SK-N-SH (cell line): ENCODE measurements at regions of chr17 and their contacts with region 1.

Region 1: DNA sequence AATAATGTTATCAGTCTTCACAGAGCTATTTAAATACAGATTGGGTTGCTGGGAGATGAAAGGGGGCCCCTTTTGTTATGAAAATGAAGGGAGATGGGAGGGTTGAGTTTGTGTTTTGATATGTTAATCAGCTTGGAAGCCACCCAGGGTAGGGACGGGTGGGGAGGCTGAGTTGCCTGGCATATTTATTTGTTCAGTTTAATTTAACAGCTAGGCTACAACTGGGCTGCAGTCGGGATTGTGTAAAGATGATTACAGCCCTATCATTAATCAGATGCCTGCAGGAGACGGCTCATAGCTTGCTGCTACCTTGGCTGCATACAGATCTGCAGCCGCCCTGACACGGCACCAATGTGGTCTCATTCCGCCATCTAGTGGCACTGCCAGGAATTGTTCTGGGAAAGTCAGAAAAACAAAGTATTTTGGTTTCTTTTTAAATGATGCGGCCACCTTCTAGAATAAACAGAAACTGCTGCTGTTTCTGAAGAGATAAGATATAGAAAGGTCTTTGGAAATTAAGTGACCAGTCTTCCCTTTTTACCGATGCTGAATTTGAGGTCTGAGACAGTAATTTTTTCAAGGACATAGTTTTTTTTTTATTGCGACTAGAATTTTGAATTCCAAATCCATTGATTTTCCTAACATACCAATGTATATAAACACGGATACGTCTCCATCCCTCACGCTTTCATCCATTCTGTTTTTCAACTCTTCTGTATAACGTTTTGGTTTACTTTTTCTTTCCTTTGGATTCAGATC is 458.0 kb upstream of the ASIC2 start:
- DNase-seq: peak; percentile 74
- H3K4me3 ChIP-seq: peak overlapping the region; percentile 26 to 46; a peak in 3 of 4 replicates
- H3K27ac ChIP-seq: no peak overlapping the region
- H3K4me1 ChIP-seq: peaks cover 0 to 5% of the 10 kb centered on the region in 2 experiments; a peak in 2 of 4 replicates
- H3K27me3 ChIP-seq: no peaks in the 10 kb centered on the region
- CTCF ChIP-seq: peak; percentile 89
- EP300 ChIP-seq: no peak
- RAD21 ChIP-seq: peak; percentile 93

Region 2: GRCh38 chr17:33038740-33039139 is 712.4 kb before region 1 on chr17:
- CTCF ChIA-PET with region 1: interaction called, 10 read pairs
- POLR2A ChIA-PET with region 1: no interaction called
- DNase-seq: peak; percentile 73
- H3K4me3 ChIP-seq: no peak overlapping the region
- H3K27ac ChIP-seq: no peak overlapping the region
- H3K4me1 ChIP-seq: no peaks in the 10 kb centered on the region
- H3K27me3 ChIP-seq: no peaks in the 10 kb centered on the region; the same call in 1 of the 2 replicates
- CTCF ChIP-seq: peak; percentile 77
- EP300 ChIP-seq: no peak
- RAD21 ChIP-seq: peak; percentile 59

Region 3: DNA sequence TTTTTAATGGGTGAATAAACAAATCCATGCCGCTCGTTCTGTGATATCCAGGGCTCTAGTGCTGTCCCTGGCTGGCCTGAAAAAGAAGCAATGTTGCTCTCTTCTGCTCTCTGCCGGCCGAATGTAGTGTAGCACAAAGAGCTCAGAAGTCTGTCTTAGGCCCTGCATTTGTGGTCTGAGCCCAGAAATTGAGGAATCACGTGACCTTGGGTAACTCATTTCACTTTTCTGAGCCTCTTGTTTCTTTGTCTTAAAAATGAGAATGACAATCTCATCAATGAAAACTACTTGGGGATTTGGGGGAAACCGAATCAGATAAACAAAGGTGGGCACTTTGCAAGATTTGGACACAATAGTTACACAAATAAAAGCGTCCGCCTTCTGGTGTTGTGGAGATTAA is 76.4 kb before region 1 on chr17:
- CTCF ChIA-PET with region 1: interaction called, 12 read pairs
- POLR2A ChIA-PET with region 1: no interaction called
- DNase-seq: peak; percentile 62
- H3K4me3 ChIP-seq: no peak overlapping the region; a peak in 1 of 4 replicates
- H3K27ac ChIP-seq: no peak overlapping the region
- H3K4me1 ChIP-seq: no peaks in the 10 kb centered on the region
- H3K27me3 ChIP-seq: no peaks in the 10 kb centered on the region
- CTCF ChIP-seq: peak; percentile 80
- EP300 ChIP-seq: no peak
- RAD21 ChIP-seq: peak; percentile 72

Region 4: GRCh38 chr17:33725675-33726271 is 25.3 kb before region 1 on chr17:
- CTCF ChIA-PET with region 1: interaction called, 62 read pairs
- POLR2A ChIA-PET with region 1: no interaction called
- DNase-seq: peak; percentile 70
- H3K4me3 ChIP-seq: no peak overlapping the region
- H3K27ac ChIP-seq: no peak overlapping the region
- H3K4me1 ChIP-seq: no peaks in the 10 kb centered on the region
- H3K27me3 ChIP-seq: no peaks in the 10 kb centered on the region
- CTCF ChIP-seq: peak; percentile 74
- EP300 ChIP-seq: no peak
- RAD21 ChIP-seq: peak; percentile 82

Region 5: GRCh38 chr17:33739714-33740113 is 11.4 kb before region 1 on chr17:
- CTCF ChIA-PET with region 1: interaction called, 36 read pairs
- POLR2A ChIA-PET with region 1: no interaction called
- DNase-seq: no peak
- H3K4me3 ChIP-seq: no peak overlapping the region
- H3K27ac ChIP-seq: no peak overlapping the region
- H3K4me1 ChIP-seq: no peaks in the 10 kb centered on the region
- H3K27me3 ChIP-seq: no peaks in the 10 kb centered on the region
- CTCF ChIP-seq: no peak
- EP300 ChIP-seq: no peak
- RAD21 ChIP-seq: no peak